Activated CD8-positive, alpha-beta memory T cell treated with anti-CD3 and anti-CD28 coated beads, Interleukin-2, amount 10 ng/mL, durations not matched to agents 7 days and 5 days (primary cell): ENCODE measurements at regions of chr3 and their contacts with region 1.

Region 1: GRCh38 chr3:32420126-32421038 is 28.7 kb downstream of the CMTM7 start:
- DNase-seq: peak; percentile 65
- ATAC-seq: peak; percentile 51
- H3K4me3 Mint-ChIP-seq: peak overlapping the region; percentile 52
- H3K27ac Mint-ChIP-seq: peak overlapping the region; percentile 92
- H3K4me1 Mint-ChIP-seq: peaks cover 87% of the 10 kb centered on the region
- H3K27me3 Mint-ChIP-seq: no peaks in the 10 kb centered on the region

Region 2: GRCh38 chr3:32296256-32297204 is 123.9 kb before region 1 on chr3:
- CTCF ChIA-PET with region 1: no interaction called
- DNase-seq: peak; percentile 75
- ATAC-seq: peak; percentile 81
- H3K4me3 Mint-ChIP-seq: no peak overlapping the region
- H3K27ac Mint-ChIP-seq: peak overlapping the region; percentile 75
- H3K4me1 Mint-ChIP-seq: peaks cover 16% of the 10 kb centered on the region
- H3K27me3 Mint-ChIP-seq: no peaks in the 10 kb centered on the region

Region 3: DNA sequence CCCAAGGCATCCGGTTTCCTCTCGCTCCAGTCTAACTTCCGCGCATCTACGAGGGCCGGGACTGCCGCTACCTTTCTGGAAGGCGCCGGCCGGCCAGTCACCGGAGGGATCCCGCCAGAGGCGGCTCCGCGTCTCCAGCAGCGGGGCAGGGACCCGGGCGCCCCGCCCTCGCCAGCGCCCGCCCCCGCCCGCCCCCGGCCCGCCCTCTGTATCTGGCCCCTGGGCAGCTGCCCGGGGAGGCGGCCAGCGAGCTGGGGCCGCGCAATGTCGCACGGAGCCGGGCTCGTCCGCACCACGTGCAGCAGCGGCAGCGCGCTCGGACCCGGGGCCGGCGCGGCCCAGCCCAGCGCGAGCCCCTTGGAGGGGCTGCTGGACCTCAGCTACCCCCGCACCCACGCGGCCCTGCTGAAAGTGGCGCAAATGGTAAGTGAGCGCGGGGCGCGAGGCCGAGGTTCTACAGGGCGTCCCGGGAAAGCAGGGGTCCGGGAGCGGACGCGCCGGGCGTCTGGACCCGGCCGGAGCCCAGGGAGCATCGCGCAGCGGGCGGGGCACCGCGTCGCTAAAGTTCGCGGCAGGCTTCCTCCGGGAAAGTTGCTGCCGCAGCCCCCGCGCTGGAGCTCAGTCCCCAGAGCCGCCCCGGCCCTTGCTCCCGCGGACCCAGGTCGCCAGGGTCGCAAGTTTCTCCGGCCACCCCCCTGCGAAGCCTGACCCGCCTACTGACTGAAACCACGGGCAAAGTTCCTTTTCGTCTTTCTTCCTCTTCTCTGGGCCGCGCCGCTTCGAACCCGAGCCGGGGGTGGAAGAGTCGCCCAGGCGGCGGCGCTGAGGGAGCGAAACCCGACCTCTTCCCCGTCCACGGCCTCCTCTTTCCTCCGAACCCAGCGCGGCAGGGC is 28.5 kb before region 1 on chr3 and contains the start of gene CMTM7:
- CTCF ChIA-PET with region 1: interaction called, 10 read pairs
- DNase-seq: peak; percentile 80
- ATAC-seq: peak; percentile 83
- H3K4me3 Mint-ChIP-seq: peak within 1 kb of the TSS; percentile 95
- H3K27ac Mint-ChIP-seq: peak within 1 kb of the TSS; percentile 93
- H3K4me1 Mint-ChIP-seq: peaks cover 55% of the 10 kb centered on the region
- H3K27me3 Mint-ChIP-seq: no peaks in the 10 kb centered on the region
- total RNA-seq, gene CMTM7: 42.6 to 49.8 TPM